Naive thymus-derived CD4-positive, alpha-beta T cell (primary cell): ENCODE measurements at regions of chr12 and their contacts with region 1.

Region 1: DNA sequence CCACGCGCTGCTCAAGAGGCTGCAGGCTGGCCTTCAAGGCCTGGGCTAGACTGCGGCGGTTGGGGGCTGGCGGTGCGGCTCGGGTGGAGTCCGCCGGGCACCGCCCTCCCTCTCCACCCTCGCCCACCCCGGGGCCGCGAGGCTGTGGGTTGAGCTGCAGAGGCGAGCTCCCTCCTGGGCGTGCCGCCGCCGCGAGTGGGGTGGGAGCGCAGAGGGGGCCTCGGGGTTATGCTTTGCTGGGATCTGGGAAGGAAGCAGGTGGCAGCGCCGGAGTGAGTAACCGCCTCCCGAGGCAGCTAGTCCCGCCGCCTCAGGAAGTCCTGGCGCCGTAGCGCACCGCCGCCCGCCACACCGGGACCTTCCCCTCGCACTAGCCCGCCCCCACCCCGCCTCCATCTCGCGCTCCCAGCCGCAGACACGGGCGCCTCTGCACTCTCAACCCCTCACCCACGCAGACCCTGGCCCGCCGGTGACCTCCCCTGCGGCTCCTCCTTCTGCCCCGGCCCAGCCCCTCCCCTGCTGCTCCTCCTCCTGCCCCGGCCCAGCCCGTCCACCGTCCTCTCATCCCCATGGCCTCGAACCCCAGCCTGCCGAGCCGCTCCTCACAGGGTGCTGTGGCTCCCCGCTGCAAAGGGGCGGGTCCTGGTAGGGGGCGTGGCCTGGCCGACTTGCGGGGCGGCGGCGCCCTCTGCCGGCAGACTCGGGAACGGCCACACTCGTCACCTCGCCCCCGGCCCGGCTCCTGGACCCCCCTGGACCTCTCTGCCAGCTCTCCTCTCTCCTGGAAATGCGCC is 16.6 kb downstream of the TAMALIN start:
- DNase-seq: peak; percentile 80 to 98 (median 90)
- ATAC-seq: peak; percentile 80
- H3K4me3 ChIP-seq: peak overlapping the region; percentile 71
- H3K4me3 Mint-ChIP-seq: peak overlapping the region; percentile 77 to 96 (median 87)
- H3K27ac ChIP-seq: peak overlapping the region; percentile 69
- H3K27ac Mint-ChIP-seq: peak overlapping the region; percentile 85 to 99 (median 93)
- H3K4me1 ChIP-seq: peaks cover 17 to 29% of the 10 kb centered on the region in 2 donors
- H3K4me1 Mint-ChIP-seq: peaks cover 34 to 49% (median 40%) of the 10 kb centered on the region in 7 donors
- H3K27me3 ChIP-seq: no peaks in the 10 kb centered on the region
- H3K27me3 Mint-ChIP-seq: peaks cover 0 to 16% (median 0%) of the 10 kb centered on the region in 5 donors

Region 2: DNA sequence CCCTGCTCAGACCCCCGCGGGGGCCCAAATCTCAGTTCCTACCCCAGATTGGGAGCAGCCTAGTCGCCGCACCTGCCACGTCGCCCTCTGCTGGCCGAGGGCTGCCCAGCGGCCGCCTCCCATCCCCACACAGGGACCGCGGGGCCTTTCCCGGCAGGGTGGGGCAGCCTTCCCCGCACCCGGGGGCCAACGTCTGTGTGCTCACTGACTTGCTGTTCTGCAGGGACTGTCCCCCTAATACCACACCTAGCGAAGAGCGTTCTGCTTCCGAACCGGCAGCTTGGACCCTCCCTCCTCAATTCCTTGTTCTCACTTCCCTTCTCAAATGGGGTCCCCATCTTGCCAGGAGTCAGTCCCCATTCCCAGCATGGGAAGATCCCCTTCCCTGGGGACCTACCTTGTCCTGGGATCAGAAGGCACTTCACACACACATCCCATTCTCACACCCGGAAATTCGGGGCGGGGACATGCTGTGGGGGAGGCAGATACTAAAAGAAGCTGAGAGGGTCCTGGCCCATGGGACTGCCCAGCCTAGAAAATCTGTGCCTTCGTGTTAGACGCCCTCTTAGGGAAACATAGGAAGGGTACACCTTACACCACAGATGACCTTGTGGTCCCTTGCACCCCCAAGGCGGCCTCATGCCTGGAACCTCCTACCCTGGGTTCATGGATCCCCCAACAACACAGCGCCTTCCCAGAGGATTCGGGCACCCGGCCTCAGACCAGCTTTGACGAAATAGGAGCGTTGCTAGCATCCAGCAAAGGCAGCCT is 99.7 kb before region 1 on chr12:
- CTCF ChIA-PET with region 1: interaction called, 3 read pairs
- POLR2A ChIA-PET with region 1: no interaction called
- intact Hi-C with region 1: loop called in 1 of 2 experiments (anchors 1 kb)
- DNase-seq: peak; percentile 12 to 66 (median 42)
- ATAC-seq: peak; percentile 83
- H3K4me3 ChIP-seq: no peak overlapping the region
- H3K4me3 Mint-ChIP-seq: peak overlapping the region in 5 of 10 donors; percentile 21 to 53 (median 44)
- H3K27ac ChIP-seq: no peak overlapping the region
- H3K27ac Mint-ChIP-seq: peak overlapping the region in 1 of 9 donors; percentile 42
- H3K4me1 ChIP-seq: no peaks in the 10 kb centered on the region
- H3K4me1 Mint-ChIP-seq: peaks cover 5 to 12% (median 9%) of the 10 kb centered on the region in 7 donors
- H3K27me3 ChIP-seq: peaks cover 0 to 3% of the 10 kb centered on the region in 2 donors
- H3K27me3 Mint-ChIP-seq: peaks cover 0 to 13% (median 0%) of the 10 kb centered on the region in 5 donors

Region 3: GRCh38 chr12:51980051-51980808 is 43.1 kb before region 1 on chr12:
- CTCF ChIA-PET with region 1: interaction called, 14 read pairs
- POLR2A ChIA-PET with region 1: no interaction called
- intact Hi-C with region 1: no loop called
- DNase-seq: peak; percentile 39 to 76 (median 65)
- ATAC-seq: peak; percentile 99
- H3K4me3 ChIP-seq: no peak overlapping the region
- H3K4me3 Mint-ChIP-seq: peak overlapping the region in 3 of 10 donors; percentile 7 to 45 (median 32)
- H3K27ac ChIP-seq: no peak overlapping the region
- H3K27ac Mint-ChIP-seq: peak overlapping the region in 5 of 9 donors; percentile 25 to 74 (median 48)
- H3K4me1 ChIP-seq: peaks cover 5 to 10% of the 10 kb centered on the region in 2 donors
- H3K4me1 Mint-ChIP-seq: peaks cover 24 to 32% (median 28%) of the 10 kb centered on the region in 7 donors
- H3K27me3 ChIP-seq: no peaks in the 10 kb centered on the region
- H3K27me3 Mint-ChIP-seq: peaks cover 0 to 5% (median 0%) of the 10 kb centered on the region in 5 donors

Region 4: DNA sequence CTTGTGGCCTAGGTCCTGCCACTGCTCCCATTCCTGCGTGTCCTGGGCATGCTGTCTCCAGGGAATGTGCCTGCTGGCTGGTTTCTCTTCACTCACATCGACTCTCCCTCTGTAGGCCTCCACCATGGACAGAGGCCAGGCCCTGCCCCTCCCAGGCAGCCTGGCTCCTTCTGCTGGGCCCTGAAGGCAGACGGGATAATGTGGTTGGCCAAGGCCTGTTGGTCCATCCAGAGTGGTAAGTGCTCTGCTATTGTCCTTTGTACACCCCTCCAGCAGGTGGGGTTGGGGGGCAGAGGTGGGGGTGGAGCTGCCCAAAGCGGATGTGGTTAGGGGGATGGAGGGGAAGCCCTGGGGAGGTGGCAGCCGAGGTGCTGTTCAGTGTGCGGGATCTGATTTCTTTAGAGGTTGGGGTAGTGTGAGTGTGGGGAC is 18.3 kb after region 1 on chr12:
- CTCF ChIA-PET with region 1: interaction called, 23 read pairs
- POLR2A ChIA-PET with region 1: interaction called, 5 read pairs
- intact Hi-C with region 1: loop called in 1 of 2 experiments (anchors 2 kb)
- DNase-seq: peak in 5 of 9 donors; percentile 39 to 55 (median 47)
- ATAC-seq: peak; percentile 54
- H3K4me3 ChIP-seq: no peak overlapping the region
- H3K4me3 Mint-ChIP-seq: peak overlapping the region in 9 of 10 donors; percentile 21 to 78 (median 60)
- H3K27ac ChIP-seq: peak overlapping the region; percentile 25
- H3K27ac Mint-ChIP-seq: peak overlapping the region in 7 of 9 donors; percentile 18 to 94 (median 64)
- H3K4me1 ChIP-seq: peaks cover 14 to 22% of the 10 kb centered on the region in 2 donors
- H3K4me1 Mint-ChIP-seq: peaks cover 11 to 39% (median 28%) of the 10 kb centered on the region in 7 donors
- H3K27me3 ChIP-seq: no peaks in the 10 kb centered on the region
- H3K27me3 Mint-ChIP-seq: peaks cover 0 to 9% (median 0%) of the 10 kb centered on the region in 5 donors

Region 5: DNA sequence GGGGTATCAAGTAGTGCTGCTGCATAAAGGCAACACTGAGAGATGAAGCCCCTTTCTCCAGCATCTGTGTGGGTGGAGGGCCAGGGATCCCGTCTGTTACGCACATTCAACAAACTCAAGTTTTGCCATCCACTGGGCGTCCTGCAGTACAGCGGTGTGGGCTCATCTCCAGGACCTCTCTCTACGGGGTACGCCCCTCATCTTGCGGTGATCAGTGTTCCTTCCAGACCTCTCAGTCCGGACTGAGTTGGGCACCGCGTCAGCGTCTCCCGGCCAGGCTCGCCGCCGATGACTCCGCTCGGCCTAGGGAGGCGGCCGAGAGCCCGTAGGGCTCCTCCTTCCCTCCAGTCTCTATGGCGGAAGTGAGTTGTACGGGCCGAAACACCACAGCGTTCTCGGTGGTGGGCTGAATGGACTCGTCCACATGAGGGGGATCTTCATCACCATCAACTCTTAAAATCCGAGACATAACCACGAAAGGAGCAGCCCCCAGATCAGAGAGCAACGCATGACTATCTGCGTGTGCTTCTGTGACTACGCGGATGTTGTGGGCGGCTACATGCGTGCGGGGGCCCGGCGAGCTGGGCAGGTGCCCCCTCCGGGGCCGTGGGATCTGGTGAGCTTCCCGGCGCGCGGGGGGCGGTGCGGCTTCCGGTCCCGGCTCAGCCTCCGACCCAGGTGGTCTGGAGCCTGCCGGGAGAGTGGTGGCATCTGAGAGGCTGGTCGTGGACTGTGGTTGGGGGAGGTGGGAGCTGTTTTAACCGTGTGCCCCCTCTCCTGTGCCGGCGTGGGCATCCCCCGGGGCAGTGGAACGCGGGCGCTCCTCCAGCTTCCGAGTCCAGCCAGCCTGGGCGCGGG is 46.2 kb after region 1 on chr12 and contains the start of gene ATG101:
- CTCF ChIA-PET with region 1: interaction called, 457 read pairs
- POLR2A ChIA-PET with region 1: interaction called, 31 read pairs
- intact Hi-C with region 1: loop called (anchors 1 kb)
- DNase-seq: peak; percentile 80 to 92 (median 89)
- ATAC-seq: peak; percentile 97
- H3K4me3 ChIP-seq: peak within 1 kb of the TSS; percentile 96
- H3K4me3 Mint-ChIP-seq: peak within 1 kb of the TSS; percentile 88 to 99 (median 96)
- H3K27ac ChIP-seq: peak within 1 kb of the TSS; percentile 87
- H3K27ac Mint-ChIP-seq: peak within 1 kb of the TSS; percentile 97 to 100 (median 98)
- H3K4me1 ChIP-seq: peaks cover 19 to 31% of the 10 kb centered on the region in 2 donors
- H3K4me1 Mint-ChIP-seq: peaks cover 35 to 59% (median 49%) of the 10 kb centered on the region in 7 donors
- H3K27me3 ChIP-seq: no peaks in the 10 kb centered on the region
- H3K27me3 Mint-ChIP-seq: peaks cover 0 to 5% (median 0%) of the 10 kb centered on the region in 5 donors
- total RNA-seq, gene ATG101: 20.7 to 39.7 (median 34.3) TPM

Region 6: GRCh38 chr12:52243856-52244614 is 220.7 kb after region 1 on chr12:
- CTCF ChIA-PET with region 1: no interaction called
- POLR2A ChIA-PET with region 1: no interaction called
- intact Hi-C with region 1: loop called in 1 of 2 experiments (anchors 10 kb)
- DNase-seq: peak in 6 of 9 donors; percentile 11 to 80 (median 22)
- ATAC-seq: peak; percentile 95
- H3K4me3 ChIP-seq: no peak overlapping the region
- H3K4me3 Mint-ChIP-seq: peak overlapping the region in 2 of 10 donors; percentile 50 to 94
- H3K27ac ChIP-seq: no peak overlapping the region
- H3K27ac Mint-ChIP-seq: peak overlapping the region in 4 of 9 donors; percentile 66 to 99 (median 72)
- H3K4me1 ChIP-seq: peaks cover 5 to 9% of the 10 kb centered on the region in 2 donors
- H3K4me1 Mint-ChIP-seq: peaks cover 10 to 65% (median 12%) of the 10 kb centered on the region in 7 donors
- H3K27me3 ChIP-seq: no peaks in the 10 kb centered on the region
- H3K27me3 Mint-ChIP-seq: peaks cover 7 to 15% (median 13%) of the 10 kb centered on the region in 5 donors

Region 7: GRCh38 chr12:52473768-52474167 is 450.4 kb after region 1 on chr12 and contains the start of gene KRT6C:
- CTCF ChIA-PET with region 1: no interaction called
- POLR2A ChIA-PET with region 1: no interaction called
- intact Hi-C with region 1: no loop called
- DNase-seq: no peak
- ATAC-seq: no peak
- H3K4me3 ChIP-seq: no peak within 1 kb of the TSS
- H3K4me3 Mint-ChIP-seq: no peak within 1 kb of the TSS
- H3K27ac ChIP-seq: no peak within 1 kb of the TSS
- H3K27ac Mint-ChIP-seq: no peak within 1 kb of the TSS
- H3K4me1 ChIP-seq: no peaks in the 10 kb centered on the region
- H3K4me1 Mint-ChIP-seq: no peaks in the 10 kb centered on the region
- H3K27me3 ChIP-seq: no peaks in the 10 kb centered on the region
- H3K27me3 Mint-ChIP-seq: peaks cover 2 to 10% (median 9%) of the 10 kb centered on the region in 5 donors
- total RNA-seq, gene KRT6C: not detected